Naive thymus-derived CD8-positive, alpha-beta T cell (primary cell): ENCODE measurements at regions of chr16 and their contacts with region 1.

Region 1: DNA sequence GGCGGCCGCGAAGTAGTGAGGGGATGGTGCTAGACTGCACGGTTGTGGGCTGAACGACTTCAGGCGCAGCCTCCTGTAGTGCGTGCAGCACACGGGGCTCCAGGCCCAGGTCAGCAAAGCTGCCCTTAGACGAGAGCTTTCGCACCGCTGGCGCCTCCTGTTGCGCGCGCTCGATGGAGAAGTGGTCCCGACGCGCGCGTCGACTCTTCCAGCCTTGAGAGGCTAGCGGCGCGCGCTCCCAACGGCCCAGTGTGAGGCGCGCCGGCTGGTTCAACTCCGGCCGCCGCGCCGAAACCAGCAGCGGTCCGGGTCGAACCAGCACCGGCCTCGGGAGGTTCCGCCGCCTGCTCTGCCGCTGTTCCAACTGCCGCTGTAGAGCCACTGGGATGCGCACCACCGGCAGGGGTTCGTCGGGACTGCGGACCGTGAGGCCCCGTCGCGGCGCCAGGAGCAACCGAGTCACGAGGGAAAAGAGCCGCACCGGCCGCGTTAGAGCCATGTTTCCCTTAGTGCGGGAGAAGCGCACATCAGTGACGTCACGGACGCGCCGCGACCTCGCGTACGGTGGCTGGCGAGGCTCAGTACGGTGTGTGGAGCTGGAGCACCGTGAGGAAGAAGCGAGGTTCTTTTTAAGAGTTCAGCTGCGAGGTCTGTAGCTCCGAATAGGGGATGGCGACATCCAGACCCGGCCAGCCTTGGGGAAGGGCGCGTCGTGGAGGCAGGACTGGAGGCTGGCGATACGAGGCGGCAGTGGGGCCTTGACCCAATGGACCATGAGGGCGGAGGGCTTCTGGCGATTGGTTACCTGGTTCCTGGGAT is at the starts of genes DDX28 and DUS2:
- DNase-seq: peak; percentile 85 to 97 (median 94)
- ATAC-seq: peak; percentile 91 to 92
- H3K4me3 Mint-ChIP-seq: peak within 1 kb of the TSS; percentile 89 to 100 (median 98)
- H3K27ac Mint-ChIP-seq: peak within 1 kb of the TSS; percentile 94 to 99 (median 98)
- H3K4me1 Mint-ChIP-seq: peaks cover 14 to 46% (median 27%) of the 10 kb centered on the region in 4 donors
- H3K27me3 Mint-ChIP-seq: peaks cover 0 to 2% (median 0%) of the 10 kb centered on the region in 5 donors
- polyA plus RNA-seq, gene DDX28: 49.7 to 60.6 (median 53.9) TPM
- polyA plus RNA-seq, gene DUS2: 6.4 to 13.1 (median 10.5) TPM

Region 2: GRCh38 chr16:67979955-67980678 is 42.8 kb before region 1 on chr16 and contains the start of gene DPEP3:
- POLR2A ChIA-PET with region 1: interaction called, 10 read pairs
- DNase-seq: peak in 2 of 10 donors; percentile 14 to 23
- ATAC-seq: peak in 1 of 2 donors; percentile 28
- H3K4me3 Mint-ChIP-seq: no peak within 1 kb of the TSS
- H3K27ac Mint-ChIP-seq: peak within 1 kb of the TSS in 1 of 10 donors; percentile 6
- H3K4me1 Mint-ChIP-seq: peaks cover 14 to 24% (median 20%) of the 10 kb centered on the region in 4 donors
- H3K27me3 Mint-ChIP-seq: no peaks in the 10 kb centered on the region
- polyA plus RNA-seq, gene DPEP3: 0.50 to 1.5 (median 1.1) TPM

Region 3: GRCh38 chr16:67993189-67994039 is 29.5 kb before region 1 on chr16:
- POLR2A ChIA-PET with region 1: interaction called, 447 read pairs
- DNase-seq: peak; percentile 71 to 87 (median 82)
- ATAC-seq: peak; percentile 90 to 91
- H3K4me3 Mint-ChIP-seq: peak overlapping the region; percentile 82 to 94 (median 90)
- H3K27ac Mint-ChIP-seq: peak overlapping the region; percentile 92 to 99 (median 97)
- H3K4me1 Mint-ChIP-seq: peaks cover 20 to 56% (median 44%) of the 10 kb centered on the region in 4 donors
- H3K27me3 Mint-ChIP-seq: no peaks in the 10 kb centered on the region

Region 4: DNA sequence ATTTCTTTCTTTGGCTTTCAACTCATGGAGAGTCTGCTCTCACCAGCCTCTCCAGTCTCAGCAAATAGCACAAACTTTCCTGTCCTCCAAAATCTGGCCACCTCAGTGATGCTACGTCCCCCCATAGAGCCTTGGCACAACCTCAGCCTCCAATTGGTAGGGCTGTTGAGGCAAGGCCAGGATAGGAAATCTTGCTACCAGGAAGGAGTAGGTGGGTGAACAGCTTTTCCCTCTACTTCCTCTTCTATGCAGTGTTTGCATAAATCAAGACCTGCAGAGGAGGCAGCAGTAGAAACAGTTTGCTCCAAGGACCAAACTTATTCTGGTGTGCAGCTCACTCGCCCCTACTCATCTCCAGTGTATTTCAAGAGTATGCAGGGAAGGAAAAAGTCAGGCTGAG is 22.9 kb before region 1 on chr16:
- POLR2A ChIA-PET with region 1: interaction called, 447 read pairs
- DNase-seq: peak in 1 of 10 donors; percentile 30
- ATAC-seq: peak; percentile 14
- H3K4me3 Mint-ChIP-seq: peak overlapping the region; percentile 78 to 97 (median 88)
- H3K27ac Mint-ChIP-seq: peak overlapping the region; percentile 88 to 100 (median 96)
- H3K4me1 Mint-ChIP-seq: peaks cover 20 to 78% (median 58%) of the 10 kb centered on the region in 4 donors
- H3K27me3 Mint-ChIP-seq: no peaks in the 10 kb centered on the region

Region 5: GRCh38 chr16:68040507-68041288 is 17.8 kb after region 1 on chr16:
- POLR2A ChIA-PET with region 1: interaction called, 12 read pairs
- DNase-seq: peak; percentile 78 to 95 (median 88)
- ATAC-seq: peak; percentile 99 to 100
- H3K4me3 Mint-ChIP-seq: peak overlapping the region in 2 of 10 donors; percentile 27 to 47
- H3K27ac Mint-ChIP-seq: peak overlapping the region in 9 of 10 donors; percentile 21 to 92 (median 66)
- H3K4me1 Mint-ChIP-seq: peaks cover 5 to 35% (median 11%) of the 10 kb centered on the region in 4 donors
- H3K27me3 Mint-ChIP-seq: no peaks in the 10 kb centered on the region

Region 6: GRCh38 chr16:68055395-68055794 is 32.5 kb after region 1 on chr16:
- POLR2A ChIA-PET with region 1: no interaction called
- DNase-seq: no peak
- ATAC-seq: no peak
- H3K4me3 Mint-ChIP-seq: peak overlapping the region in 1 of 10 donors; percentile 37
- H3K27ac Mint-ChIP-seq: peak overlapping the region in 2 of 10 donors; percentile 9 to 76
- H3K4me1 Mint-ChIP-seq: peaks cover 7 to 18% (median 13%) of the 10 kb centered on the region in 4 donors
- H3K27me3 Mint-ChIP-seq: no peaks in the 10 kb centered on the region

Region 7: DNA sequence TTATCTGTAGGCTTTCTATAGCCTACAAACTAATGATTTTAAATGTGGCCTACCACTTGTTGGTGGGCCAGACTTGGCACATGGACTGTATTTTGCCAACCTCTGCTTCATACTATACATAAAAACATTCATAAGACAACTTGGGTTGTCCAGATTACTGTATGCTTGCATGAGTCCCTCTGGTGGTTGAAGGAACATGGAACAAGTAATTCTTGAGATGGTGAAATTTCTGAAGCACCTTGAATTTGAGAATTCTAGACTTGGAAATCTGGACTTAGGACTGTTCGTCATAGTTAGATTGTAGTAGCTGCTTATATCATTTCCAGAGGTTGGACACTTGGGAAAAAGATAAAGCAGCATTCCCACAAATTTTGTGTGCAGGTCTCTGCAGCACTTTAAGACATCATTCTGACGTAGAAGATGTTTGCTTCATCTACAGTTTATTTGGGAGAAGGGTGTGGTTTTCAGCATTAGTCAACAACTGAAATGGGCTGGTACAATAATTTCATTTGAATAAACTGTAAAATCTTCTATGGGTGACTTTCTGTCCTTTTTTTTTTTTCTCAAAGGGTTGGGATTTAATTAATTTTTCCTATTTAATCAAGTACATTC is 93.4 kb after region 1 on chr16:
- POLR2A ChIA-PET with region 1: no interaction called
- DNase-seq: peak in 3 of 10 donors; percentile 5 to 39 (median 31)
- ATAC-seq: peak; percentile 62 to 72
- H3K4me3 Mint-ChIP-seq: peak overlapping the region in 9 of 10 donors; percentile 12 to 57 (median 41)
- H3K27ac Mint-ChIP-seq: peak overlapping the region; percentile 16 to 88 (median 64)
- H3K4me1 Mint-ChIP-seq: peaks cover 40 to 96% (median 83%) of the 10 kb centered on the region in 4 donors
- H3K27me3 Mint-ChIP-seq: no peaks in the 10 kb centered on the region

Region 8: GRCh38 chr16:68166264-68166663 is 143.4 kb after region 1 on chr16:
- POLR2A ChIA-PET with region 1: no interaction called
- DNase-seq: no peak
- ATAC-seq: no peak
- H3K4me3 Mint-ChIP-seq: no peak overlapping the region
- H3K27ac Mint-ChIP-seq: peak overlapping the region in 7 of 10 donors; percentile 6 to 75 (median 35)
- H3K4me1 Mint-ChIP-seq: peaks cover 0 to 4% (median 3%) of the 10 kb centered on the region in 4 donors
- H3K27me3 Mint-ChIP-seq: no peaks in the 10 kb centered on the region